H1 (cell line): ENCODE measurements at regions of chr18 and their contacts with region 1.

Region 1: GRCh38 chr18:26516964-26517363 is 31.4 kb downstream of the KCTD1 start:
- DNase-seq: no peak
- H3K4me3 ChIP-seq: no peak overlapping the region
- H3K27ac ChIP-seq: no peak overlapping the region
- H3K4me1 ChIP-seq: peaks cover 0 to 17% (median 2%) of the 10 kb centered on the region in 4 experiments; a peak in 3 of 7 replicates
- H3K27me3 ChIP-seq: no peaks in the 10 kb centered on the region
- CTCF ChIP-seq: no peak
- EP300 ChIP-seq: no peak
- POLR2A ChIP-seq: no peak
- RAD21 ChIP-seq: no peak

Region 2: GRCh38 chr18:26407706-26408601 is 109.0 kb before region 1 on chr18:
- CTCF ChIA-PET with region 1: no interaction called
- POLR2A ChIA-PET with region 1: no interaction called
- DNase-seq: no peak
- H3K4me3 ChIP-seq: no peak overlapping the region
- H3K27ac ChIP-seq: no peak overlapping the region
- H3K4me1 ChIP-seq: peaks cover 0 to 4% (median 2%) of the 10 kb centered on the region in 4 experiments; a peak in 2 of 7 replicates
- H3K27me3 ChIP-seq: no peaks in the 10 kb centered on the region
- CTCF ChIP-seq: no peak
- EP300 ChIP-seq: no peak
- POLR2A ChIP-seq: no peak
- RAD21 ChIP-seq: no peak

Region 3: GRCh38 chr18:26504831-26505230 is 12.1 kb before region 1 on chr18:
- CTCF ChIA-PET with region 1: interaction called, 16 read pairs
- POLR2A ChIA-PET with region 1: interaction called, 3 read pairs
- DNase-seq: no peak
- H3K4me3 ChIP-seq: no peak overlapping the region
- H3K27ac ChIP-seq: no peak overlapping the region
- H3K4me1 ChIP-seq: no peaks in the 10 kb centered on the region
- H3K27me3 ChIP-seq: no peaks in the 10 kb centered on the region
- CTCF ChIP-seq: no peak
- EP300 ChIP-seq: no peak
- POLR2A ChIP-seq: no peak
- RAD21 ChIP-seq: no peak

Region 4: GRCh38 chr18:26556573-26556972 is 39.6 kb after region 1 on chr18:
- CTCF ChIA-PET with region 1: no interaction called
- POLR2A ChIA-PET with region 1: no interaction called
- DNase-seq: no peak
- H3K4me3 ChIP-seq: no peak overlapping the region
- H3K27ac ChIP-seq: no peak overlapping the region
- H3K4me1 ChIP-seq: no peaks in the 10 kb centered on the region; a peak in 1 of 7 replicates
- H3K27me3 ChIP-seq: peaks cover 5 to 15% (median 11%) of the 10 kb centered on the region in 4 experiments
- CTCF ChIP-seq: no peak
- EP300 ChIP-seq: no peak
- POLR2A ChIP-seq: no peak
- RAD21 ChIP-seq: no peak

Region 5: DNA sequence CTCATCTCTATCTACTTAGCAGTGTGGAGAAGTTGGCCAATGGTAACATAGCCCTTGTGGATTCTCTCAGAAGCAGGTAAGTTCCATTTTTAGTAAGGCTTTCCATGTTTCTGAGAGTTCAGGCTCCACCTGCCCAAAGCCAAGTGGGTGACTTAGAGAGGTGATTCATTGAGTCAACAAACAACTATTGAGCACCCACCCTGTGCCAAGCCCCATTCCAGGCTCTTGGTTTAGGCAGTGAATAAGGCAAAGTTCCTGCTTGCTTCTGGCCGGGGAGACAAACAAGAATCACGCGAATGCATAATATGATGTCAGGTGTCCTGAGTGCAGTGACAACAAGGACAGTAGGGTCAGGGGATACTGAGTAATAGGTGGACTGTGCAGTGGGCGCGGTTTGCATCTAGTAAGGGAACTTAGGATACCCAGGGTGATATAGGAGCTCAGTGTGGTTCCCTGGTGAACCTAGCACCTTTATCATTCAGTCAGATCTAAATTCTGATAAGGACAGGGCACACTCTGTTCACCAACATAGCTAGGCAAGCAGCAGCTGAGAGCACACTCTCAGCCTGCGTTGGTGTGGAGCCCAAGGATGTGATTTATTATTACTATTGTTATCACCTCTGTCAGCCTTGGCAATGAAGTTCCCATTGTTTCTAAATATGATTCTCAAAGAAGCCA is 63.1 kb after region 1 on chr18:
- CTCF ChIA-PET with region 1: no interaction called
- POLR2A ChIA-PET with region 1: no interaction called
- DNase-seq: no peak
- H3K4me3 ChIP-seq: no peak overlapping the region
- H3K27ac ChIP-seq: no peak overlapping the region
- H3K4me1 ChIP-seq: peaks cover 0 to 9% (median 3%) of the 10 kb centered on the region in 4 experiments; a peak in 6 of 7 replicates
- H3K27me3 ChIP-seq: peaks cover 0 to 13% (median 1%) of the 10 kb centered on the region in 4 experiments; a peak in 3 of 7 replicates
- CTCF ChIP-seq: no peak
- EP300 ChIP-seq: no peak
- POLR2A ChIP-seq: no peak
- RAD21 ChIP-seq: no peak

Region 6: DNA sequence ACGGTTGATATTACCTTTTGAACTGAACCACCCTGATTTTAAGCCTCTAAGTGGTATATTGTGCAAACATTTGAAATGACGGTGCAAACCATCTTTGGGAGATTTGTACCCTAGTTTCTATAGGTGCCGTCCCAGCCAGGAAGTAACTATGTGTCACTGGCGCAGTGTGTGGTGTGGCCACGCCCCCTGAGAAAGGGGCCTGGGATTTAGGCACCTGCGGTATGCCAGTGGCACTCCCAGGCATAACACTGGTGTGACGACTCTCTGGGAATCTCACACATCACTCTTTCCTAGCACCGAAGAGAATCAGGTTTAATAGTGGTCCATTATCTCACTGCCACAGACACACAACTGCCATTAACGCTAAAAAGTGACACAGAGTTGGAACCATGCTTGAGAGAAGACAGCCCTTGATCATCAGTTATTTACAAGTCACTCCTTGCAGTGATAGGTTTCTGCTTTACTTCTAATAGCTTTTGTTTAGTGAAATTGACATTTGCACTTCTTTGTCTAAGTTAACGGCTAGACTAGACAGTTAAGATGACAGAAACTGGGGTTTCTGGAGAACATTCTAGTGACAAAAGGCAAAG is 337.4 kb after region 1 on chr18:
- CTCF ChIA-PET with region 1: no interaction called
- POLR2A ChIA-PET with region 1: no interaction called
- DNase-seq: no peak
- H3K4me3 ChIP-seq: no peak overlapping the region
- H3K27ac ChIP-seq: no peak overlapping the region
- H3K4me1 ChIP-seq: no peaks in the 10 kb centered on the region
- H3K27me3 ChIP-seq: no peaks in the 10 kb centered on the region
- CTCF ChIP-seq: no peak
- EP300 ChIP-seq: no peak
- POLR2A ChIP-seq: no peak
- RAD21 ChIP-seq: no peak